MCF 10A (cell line): ENCODE measurements at regions of chr6 and their contacts with region 1.

Region 1: GRCh38 chr6:89352278-89353117 is at the start of gene UBE2J1:
- DNase-seq: peak; percentile 89
- H3K4me3 Mint-ChIP-seq: peak within 1 kb of the TSS; percentile 96
- H3K27ac Mint-ChIP-seq: peak within 1 kb of the TSS; percentile 98
- H3K4me1 Mint-ChIP-seq: peaks cover 22% of the 10 kb centered on the region
- H3K27me3 Mint-ChIP-seq: no peaks in the 10 kb centered on the region
- CTCF ChIP-seq: no peak
- total RNA-seq, gene UBE2J1: 39.0 and 40.0 TPM in 2 replicates

Region 2: GRCh38 chr6:88963139-88964090 is 389.1 kb before region 1 on chr6 and contains the start of gene RNGTT:
- CTCF ChIA-PET with region 1: no interaction called
- POLR2A ChIA-PET with region 1: interaction called, 17 read pairs
- intact Hi-C with region 1: no loop called
- DNase-seq: peak; percentile 99
- H3K4me3 Mint-ChIP-seq: peak within 1 kb of the TSS; percentile 93
- H3K27ac Mint-ChIP-seq: peak within 1 kb of the TSS; percentile 92
- H3K4me1 Mint-ChIP-seq: peaks cover 14% of the 10 kb centered on the region
- H3K27me3 Mint-ChIP-seq: no peaks in the 10 kb centered on the region
- CTCF ChIP-seq: no peak
- total RNA-seq, gene RNGTT: 14.6 and 20.6 TPM in 2 replicates

Region 3: DNA sequence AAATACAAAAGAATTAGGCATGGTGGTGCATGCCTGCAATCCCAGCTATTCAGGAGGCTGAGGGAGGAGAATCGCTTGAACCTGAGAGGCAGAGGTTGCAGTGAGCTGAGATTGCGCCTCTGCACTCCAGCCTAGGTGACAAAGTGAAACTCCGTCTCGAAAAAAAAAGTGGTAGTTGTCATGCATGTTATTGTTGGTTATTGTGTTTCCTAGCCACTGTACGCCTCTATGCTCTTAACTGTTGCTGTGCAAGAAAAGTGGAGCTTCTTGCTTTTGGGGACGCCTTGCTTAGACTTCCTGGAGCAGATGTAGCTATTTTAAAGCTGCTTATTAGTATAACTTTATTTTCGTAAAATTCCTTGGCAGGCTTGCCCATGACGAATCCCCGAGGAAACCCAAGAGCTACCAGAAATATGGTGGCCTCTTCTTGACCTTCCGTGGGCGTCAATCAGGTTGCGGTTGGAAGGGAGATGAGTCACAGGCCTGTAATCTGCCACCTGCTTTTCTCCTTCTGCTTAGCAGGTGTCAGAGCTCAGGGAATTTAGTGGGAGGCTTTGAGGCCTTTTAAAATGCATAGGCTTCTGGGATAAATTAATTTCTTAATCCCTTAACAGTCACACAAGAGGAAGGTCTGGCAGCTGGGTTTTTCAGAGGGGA is 54.7 kb before region 1 on chr6:
- CTCF ChIA-PET with region 1: no interaction called
- POLR2A ChIA-PET with region 1: interaction called, 8 read pairs
- intact Hi-C with region 1: loop called (anchors 1 kb)
- DNase-seq: peak; percentile 99
- H3K4me3 Mint-ChIP-seq: peak overlapping the region; percentile 59
- H3K27ac Mint-ChIP-seq: peak overlapping the region; percentile 68
- H3K4me1 Mint-ChIP-seq: peaks cover 7% of the 10 kb centered on the region
- H3K27me3 Mint-ChIP-seq: peaks cover 46% of the 10 kb centered on the region
- CTCF ChIP-seq: no peak

Region 4: DNA sequence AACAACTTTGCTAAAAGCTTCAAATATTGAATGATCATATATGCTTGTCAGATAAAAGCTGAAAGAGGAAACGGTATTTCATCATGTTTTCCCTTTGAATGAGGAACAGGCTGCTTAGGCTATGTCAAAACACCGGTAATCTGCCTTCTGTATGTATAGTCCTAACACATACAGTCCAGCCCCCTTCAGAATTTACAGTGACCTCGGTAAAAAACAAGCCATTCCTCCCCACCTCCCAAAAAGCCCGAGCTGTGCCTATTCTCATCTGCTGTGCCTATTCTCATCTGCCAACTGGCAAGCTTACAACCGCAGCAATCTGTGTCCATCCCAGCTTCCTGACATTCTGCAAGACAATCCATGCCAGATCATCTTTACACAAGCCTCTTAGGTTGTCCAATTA is 26.8 kb after region 1 on chr6:
- CTCF ChIA-PET with region 1: interaction called, 4 read pairs
- POLR2A ChIA-PET with region 1: interaction called, 11 read pairs
- intact Hi-C with region 1: no loop called
- DNase-seq: no peak
- H3K4me3 Mint-ChIP-seq: no peak overlapping the region
- H3K27ac Mint-ChIP-seq: no peak overlapping the region
- H3K4me1 Mint-ChIP-seq: no peaks in the 10 kb centered on the region
- H3K27me3 Mint-ChIP-seq: no peaks in the 10 kb centered on the region
- CTCF ChIP-seq: no peak